H1 (cell line): ENCODE measurements at regions of chr14 and their contacts with region 1.

Region 1: GRCh38 chr14:95527387-95528002 is 7.4 kb upstream of the GLRX5 start:
- DNase-seq: no peak
- H3K4me3 ChIP-seq: no peak overlapping the region
- H3K27ac ChIP-seq: no peak overlapping the region
- H3K4me1 ChIP-seq: peaks cover 0 to 12% (median 0%) of the 10 kb centered on the region in 4 experiments; a peak in 2 of 7 replicates
- H3K27me3 ChIP-seq: no peaks in the 10 kb centered on the region
- CTCF ChIP-seq: peak in 2 of 3 experiments; percentile 49 to 50; a peak in 3 of 4 replicates
- EP300 ChIP-seq: no peak
- POLR2A ChIP-seq: no peak
- RAD21 ChIP-seq: peak; percentile 49 to 52

Region 2: DNA sequence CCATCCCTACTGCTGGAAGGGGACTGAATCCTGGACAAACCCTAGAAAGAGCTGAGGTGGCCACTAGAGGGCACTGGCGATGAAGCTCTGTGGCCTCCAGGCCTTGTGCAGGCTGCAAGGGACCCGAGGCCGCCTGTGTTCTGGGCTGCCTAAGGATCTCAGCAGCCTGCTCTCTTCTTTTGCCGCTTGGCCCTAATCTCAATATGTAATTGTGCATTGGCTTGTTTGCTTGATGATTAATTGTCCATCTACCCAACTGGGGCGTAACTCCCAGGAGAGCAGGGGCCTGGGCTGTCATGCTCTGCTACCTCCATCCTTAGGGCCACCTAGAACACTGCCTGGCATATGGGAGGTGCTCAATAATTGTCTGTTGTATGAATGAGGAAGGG is 84.9 kb before region 1 on chr14:
- CTCF ChIA-PET with region 1: interaction called, 44 read pairs
- POLR2A ChIA-PET with region 1: interaction called, 3 read pairs
- DNase-seq: peak; percentile 53 to 86
- H3K4me3 ChIP-seq: no peak overlapping the region
- H3K27ac ChIP-seq: no peak overlapping the region
- H3K4me1 ChIP-seq: no peaks in the 10 kb centered on the region
- H3K27me3 ChIP-seq: no peaks in the 10 kb centered on the region
- CTCF ChIP-seq: peak; percentile 85 to 94 (median 89)
- EP300 ChIP-seq: no peak
- POLR2A ChIP-seq: no peak
- RAD21 ChIP-seq: peak; percentile 89 to 92

Region 3: GRCh38 chr14:95460647-95461478 is 66.6 kb before region 1 on chr14:
- CTCF ChIA-PET with region 1: interaction called, 10 read pairs
- POLR2A ChIA-PET with region 1: no interaction called
- DNase-seq: no peak
- H3K4me3 ChIP-seq: peak overlapping the region in 2 of 4 experiments; percentile 10 to 41; a peak in 2 of 8 replicates
- H3K27ac ChIP-seq: no peak overlapping the region
- H3K4me1 ChIP-seq: peaks cover 0 to 11% (median 8%) of the 10 kb centered on the region in 4 experiments; a peak in 5 of 7 replicates
- H3K27me3 ChIP-seq: no peaks in the 10 kb centered on the region; a peak in 1 of 7 replicates
- CTCF ChIP-seq: no peak
- EP300 ChIP-seq: no peak
- POLR2A ChIP-seq: no peak
- RAD21 ChIP-seq: no peak

Region 4: DNA sequence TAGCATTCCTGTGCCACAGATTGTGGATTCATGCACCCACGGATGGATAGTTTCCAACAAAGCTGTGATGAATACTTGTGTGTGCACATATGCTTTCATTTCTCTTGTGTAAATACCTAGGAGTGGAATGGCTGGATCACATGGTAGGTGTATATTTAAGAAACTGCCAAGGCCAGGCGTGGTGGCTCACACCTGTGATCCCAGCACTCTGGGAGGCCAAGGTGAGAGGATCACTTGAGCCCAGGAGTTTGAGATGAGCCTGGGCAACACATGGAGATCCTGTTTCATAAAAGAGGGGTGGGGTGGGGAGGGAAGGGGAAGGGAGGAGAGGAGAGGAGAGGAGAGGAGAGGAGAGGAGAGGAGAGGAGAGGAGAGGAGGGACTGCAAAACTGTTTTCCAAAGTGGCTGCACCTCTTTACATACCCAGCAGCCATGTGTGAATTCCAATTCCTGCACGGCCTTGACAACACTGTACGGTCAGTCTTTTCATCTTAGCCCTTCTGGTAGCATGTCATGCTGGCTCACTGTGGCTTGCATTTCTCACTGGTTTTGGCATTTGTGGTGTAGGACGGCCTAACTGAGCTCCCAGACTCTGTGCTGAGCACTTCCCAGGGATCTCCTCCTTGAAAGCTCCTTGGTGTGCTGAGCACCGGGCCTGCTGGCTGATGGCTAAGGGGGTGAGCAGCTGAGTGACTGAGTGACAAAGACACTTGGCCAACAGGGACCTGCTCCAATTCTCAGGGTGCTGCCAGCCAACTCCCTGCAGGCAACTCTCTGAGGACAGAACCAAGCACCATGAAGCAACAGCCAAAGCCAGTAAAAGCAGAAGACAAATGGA is 38.9 kb before region 1 on chr14:
- CTCF ChIA-PET with region 1: interaction called, 10 read pairs
- POLR2A ChIA-PET with region 1: interaction called, 3 read pairs
- DNase-seq: no peak
- H3K4me3 ChIP-seq: no peak overlapping the region
- H3K27ac ChIP-seq: no peak overlapping the region
- H3K4me1 ChIP-seq: peaks cover 0 to 5% (median 3%) of the 10 kb centered on the region in 4 experiments; a peak in 2 of 7 replicates
- H3K27me3 ChIP-seq: no peaks in the 10 kb centered on the region
- CTCF ChIP-seq: no peak
- EP300 ChIP-seq: no peak
- POLR2A ChIP-seq: no peak
- RAD21 ChIP-seq: no peak

Region 5: GRCh38 chr14:95507701-95508103 is 19.8 kb before region 1 on chr14:
- CTCF ChIA-PET with region 1: interaction called, 32 read pairs
- POLR2A ChIA-PET with region 1: no interaction called
- DNase-seq: no peak
- H3K4me3 ChIP-seq: no peak overlapping the region
- H3K27ac ChIP-seq: no peak overlapping the region
- H3K4me1 ChIP-seq: no peaks in the 10 kb centered on the region
- H3K27me3 ChIP-seq: no peaks in the 10 kb centered on the region; a peak in 1 of 7 replicates
- CTCF ChIP-seq: no peak
- EP300 ChIP-seq: no peak
- POLR2A ChIP-seq: no peak
- RAD21 ChIP-seq: no peak